GM12878 (cell line): ENCODE measurements at regions of chr2 and their contacts with region 1.

Region 1: DNA sequence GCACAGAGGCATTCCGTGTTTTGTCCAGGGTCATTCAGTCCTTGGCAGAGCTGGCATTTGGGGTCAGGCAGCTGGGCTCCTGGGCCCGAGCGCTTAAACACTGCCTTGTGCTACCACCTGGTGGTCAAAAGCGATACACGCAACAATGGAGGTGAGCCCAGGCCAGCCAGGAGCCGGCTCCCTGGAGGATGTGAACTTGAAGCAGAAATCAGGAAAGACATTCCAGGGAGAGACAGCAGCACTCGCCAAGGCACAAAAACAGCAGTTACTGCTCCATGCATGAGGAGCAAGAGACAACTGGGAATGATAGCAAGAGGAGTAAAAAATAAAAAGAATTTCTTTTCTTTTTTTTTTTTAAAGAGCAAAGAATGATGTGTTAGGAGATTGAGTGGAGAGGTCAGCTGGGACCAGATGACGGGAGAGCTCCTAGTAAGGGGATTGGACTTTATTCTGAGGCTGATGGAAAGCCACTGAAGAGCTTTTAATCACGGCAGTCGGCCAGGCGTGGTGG is 20.7 kb downstream of the SCYGR8 start:
- DNase-seq: no peak
- ATAC-seq: peak; percentile 100
- H3K4me3 ChIP-seq: no peak overlapping the region
- H3K27ac ChIP-seq: no peak overlapping the region
- H3K4me1 ChIP-seq: no peaks in the 10 kb centered on the region
- H3K27me3 ChIP-seq: no peaks in the 10 kb centered on the region
- CTCF ChIP-seq: peak; percentile 84 to 91 (median 84)
- EP300 ChIP-seq: no peak
- POLR2A ChIP-seq: no peak
- RAD21 ChIP-seq: peak; percentile 93

Region 2: DNA sequence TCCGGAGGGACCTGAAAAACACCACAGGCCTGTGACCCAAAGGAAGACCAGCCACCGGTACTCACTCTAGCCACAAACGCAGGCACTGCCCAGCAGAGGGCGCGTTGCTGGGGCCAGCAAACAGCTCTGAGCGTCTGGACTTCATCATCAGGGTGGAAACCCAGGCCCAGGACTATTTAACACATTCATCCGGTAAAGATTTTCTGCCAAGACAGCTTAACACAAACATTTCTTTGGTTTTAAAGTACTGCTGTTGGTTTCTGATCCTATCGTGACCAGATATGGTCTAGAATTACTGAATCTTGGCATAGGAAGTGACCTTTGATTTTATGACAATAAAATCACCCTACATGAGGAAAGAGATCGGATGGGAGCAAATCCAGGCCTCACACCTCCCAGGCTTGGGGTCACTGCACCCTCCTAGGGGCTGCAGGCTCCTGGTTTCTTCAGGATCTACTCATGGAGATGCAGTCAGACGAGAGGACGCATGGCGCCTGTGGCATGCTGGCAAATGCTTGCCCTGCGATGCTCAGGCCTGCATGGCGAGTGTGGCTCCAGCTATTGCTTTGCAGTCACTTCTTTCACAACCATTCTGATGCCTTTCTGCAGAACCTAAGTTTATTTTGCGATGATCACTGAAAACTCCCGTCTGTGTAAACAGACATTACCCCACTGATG is 732.8 kb before region 1 on chr2:
- CTCF ChIA-PET with region 1: interaction called, 10 read pairs
- POLR2A ChIA-PET with region 1: no interaction called
- RAD21 ChIA-PET with region 1: no interaction called
- SMC1A ChIA-PET with region 1: no interaction called
- in situ Hi-C with region 1: no loop called
- intact Hi-C with region 1: no loop called
- DNase-seq: no peak
- ATAC-seq: peak; percentile 92
- H3K4me3 ChIP-seq: no peak overlapping the region
- H3K27ac ChIP-seq: no peak overlapping the region
- H3K4me1 ChIP-seq: no peaks in the 10 kb centered on the region
- H3K27me3 ChIP-seq: no peaks in the 10 kb centered on the region
- CTCF ChIP-seq: peak; percentile 53 to 82 (median 74)
- EP300 ChIP-seq: no peak
- POLR2A ChIP-seq: no peak
- RAD21 ChIP-seq: peak; percentile 52

Region 3: DNA sequence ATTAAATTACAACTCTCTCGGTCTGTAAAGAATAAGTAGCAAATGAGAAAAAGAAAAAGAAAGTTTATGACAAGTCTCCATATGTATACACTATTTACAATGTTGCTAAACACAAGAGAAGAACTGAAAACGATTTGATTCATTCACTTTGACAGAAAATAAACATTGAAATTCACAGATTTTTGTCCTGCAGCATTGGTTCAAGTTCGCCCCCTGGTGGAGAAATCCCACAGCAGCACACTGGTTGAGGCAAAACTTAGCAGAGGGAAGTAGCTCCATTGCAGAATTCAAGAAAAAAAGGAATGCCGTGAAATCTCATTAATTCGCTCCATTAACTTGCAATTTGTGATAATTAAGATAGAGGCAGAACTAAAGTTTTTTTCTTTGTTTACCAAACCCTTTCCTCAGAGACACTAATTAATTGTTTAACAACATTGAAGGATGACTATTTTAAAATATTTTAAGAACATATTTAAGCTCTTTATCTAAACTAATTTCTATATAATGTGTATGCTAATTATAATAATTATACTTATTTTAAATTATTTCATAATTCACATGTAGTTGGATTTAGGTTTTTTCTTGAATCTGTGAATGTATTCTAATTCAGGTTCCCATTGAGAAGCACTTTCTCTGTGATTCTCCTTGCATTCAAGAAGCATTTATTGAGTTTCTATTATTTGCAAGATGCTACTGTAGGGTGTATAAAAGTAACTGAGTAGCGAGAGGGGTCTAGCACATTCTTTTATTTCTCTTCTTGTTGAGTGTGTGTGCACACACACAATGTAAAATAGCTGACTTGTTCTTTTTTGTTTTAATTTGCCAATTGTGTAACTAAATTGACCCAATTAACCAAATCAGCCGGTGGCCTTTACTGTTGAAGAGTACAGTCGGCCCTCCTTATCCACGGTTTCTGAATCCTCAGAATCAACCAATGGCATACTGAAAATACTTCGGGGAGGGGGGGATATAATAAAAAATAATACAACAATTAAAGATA is 527.9 kb before region 1 on chr2:
- CTCF ChIA-PET with region 1: interaction called, 24 read pairs
- POLR2A ChIA-PET with region 1: no interaction called
- RAD21 ChIA-PET with region 1: interaction called, 21 read pairs
- SMC1A ChIA-PET with region 1: interaction called, 18 read pairs
- in situ Hi-C with region 1: no loop called
- intact Hi-C with region 1: loop called (anchors 5 kb)
- DNase-seq: peak; percentile 21
- ATAC-seq: peak; percentile 80
- H3K4me3 ChIP-seq: no peak overlapping the region
- H3K27ac ChIP-seq: no peak overlapping the region
- H3K4me1 ChIP-seq: no peaks in the 10 kb centered on the region
- H3K27me3 ChIP-seq: no peaks in the 10 kb centered on the region
- CTCF ChIP-seq: peak; percentile 89 to 95 (median 91); a peak in 5 of 6 replicates
- EP300 ChIP-seq: no peak
- POLR2A ChIP-seq: no peak
- RAD21 ChIP-seq: peak; percentile 97

Region 4: GRCh38 chr2:227479865-227480475 is 286.5 kb before region 1 on chr2:
- CTCF ChIA-PET with region 1: interaction called, 54 read pairs
- POLR2A ChIA-PET with region 1: no interaction called
- RAD21 ChIA-PET with region 1: interaction called, 28 read pairs
- SMC1A ChIA-PET with region 1: interaction called, 28 read pairs
- in situ Hi-C with region 1: loop called (anchors 5 kb)
- intact Hi-C with region 1: no loop called
- DNase-seq: no peak
- ATAC-seq: peak; percentile 64
- H3K4me3 ChIP-seq: peak overlapping the region; percentile 12; the same call in 1 of the 2 replicates
- H3K27ac ChIP-seq: peak overlapping the region; percentile 68
- H3K4me1 ChIP-seq: peaks cover 32% of the 10 kb centered on the region
- H3K27me3 ChIP-seq: no peaks in the 10 kb centered on the region
- CTCF ChIP-seq: peak; percentile 28 to 65 (median 56); a peak in 5 of 6 replicates
- EP300 ChIP-seq: no peak
- POLR2A ChIP-seq: no peak
- RAD21 ChIP-seq: peak; percentile 65

Region 5: GRCh38 chr2:227739351-227739750 is 27.1 kb before region 1 on chr2:
- CTCF ChIA-PET with region 1: interaction called, 24 read pairs
- POLR2A ChIA-PET with region 1: no interaction called
- RAD21 ChIA-PET with region 1: interaction called, 6 read pairs
- SMC1A ChIA-PET with region 1: interaction called, 14 read pairs
- in situ Hi-C with region 1: no loop called
- intact Hi-C with region 1: no loop called
- DNase-seq: no peak
- ATAC-seq: no peak
- H3K4me3 ChIP-seq: no peak overlapping the region
- H3K27ac ChIP-seq: no peak overlapping the region
- H3K4me1 ChIP-seq: no peaks in the 10 kb centered on the region
- H3K27me3 ChIP-seq: no peaks in the 10 kb centered on the region
- CTCF ChIP-seq: no peak
- EP300 ChIP-seq: no peak
- POLR2A ChIP-seq: no peak
- RAD21 ChIP-seq: no peak

Region 6: DNA sequence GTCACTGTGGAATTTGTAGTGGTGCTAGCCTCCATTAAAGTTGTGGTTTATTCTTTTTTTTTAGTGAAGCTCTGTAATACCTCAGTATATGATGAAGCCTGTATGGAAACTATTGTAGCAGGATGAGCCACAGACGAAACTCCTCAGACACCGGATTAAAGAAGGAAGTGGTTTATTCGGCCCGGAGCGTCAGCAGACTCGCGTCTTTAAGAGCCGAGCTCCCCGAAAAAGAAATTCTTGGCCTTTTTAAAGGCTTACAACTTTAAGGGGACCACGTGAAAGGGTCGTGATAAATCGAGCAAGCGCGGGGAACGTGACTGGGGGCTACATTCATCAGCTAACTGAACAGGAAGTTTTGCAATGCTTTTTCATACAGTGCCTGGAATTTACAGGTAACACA is 39.1 kb after region 1 on chr2:
- CTCF ChIA-PET with region 1: no interaction called
- POLR2A ChIA-PET with region 1: interaction called, 3 read pairs
- RAD21 ChIA-PET with region 1: interaction called, 13 read pairs
- SMC1A ChIA-PET with region 1: interaction called, 8 read pairs
- in situ Hi-C with region 1: no loop called
- intact Hi-C with region 1: no loop called
- DNase-seq: peak; percentile 45
- ATAC-seq: peak; percentile 77
- H3K4me3 ChIP-seq: no peak overlapping the region
- H3K27ac ChIP-seq: peak overlapping the region; percentile 52
- H3K4me1 ChIP-seq: peaks cover 3% of the 10 kb centered on the region; the same call in 1 of the 2 replicates
- H3K27me3 ChIP-seq: no peaks in the 10 kb centered on the region
- CTCF ChIP-seq: no peak
- EP300 ChIP-seq: no peak
- POLR2A ChIP-seq: no peak
- RAD21 ChIP-seq: no peak

Region 7: GRCh38 chr2:227884511-227884947 is 118.1 kb after region 1 on chr2:
- CTCF ChIA-PET with region 1: interaction called, 14 read pairs
- POLR2A ChIA-PET with region 1: no interaction called
- RAD21 ChIA-PET with region 1: interaction called, 3 read pairs
- SMC1A ChIA-PET with region 1: interaction called, 9 read pairs
- in situ Hi-C with region 1: no loop called
- intact Hi-C with region 1: no loop called
- DNase-seq: no peak
- ATAC-seq: peak; percentile 99
- H3K4me3 ChIP-seq: no peak overlapping the region
- H3K27ac ChIP-seq: no peak overlapping the region
- H3K4me1 ChIP-seq: no peaks in the 10 kb centered on the region
- H3K27me3 ChIP-seq: 0 out of 4 replicates have a peak, but pooled peaks cover 0 to 2% of the 10 kb centered on the region in 2 experiments
- CTCF ChIP-seq: peak; percentile 85 to 96 (median 96)
- EP300 ChIP-seq: no peak
- POLR2A ChIP-seq: no peak
- RAD21 ChIP-seq: peak; percentile 67

Region 8: GRCh38 chr2:228056293-228057097 is 290.1 kb after region 1 on chr2:
- CTCF ChIA-PET with region 1: no interaction called
- POLR2A ChIA-PET with region 1: no interaction called
- RAD21 ChIA-PET with region 1: no interaction called
- SMC1A ChIA-PET with region 1: no interaction called
- in situ Hi-C with region 1: no loop called
- intact Hi-C with region 1: no loop called
- DNase-seq: no peak
- ATAC-seq: no peak
- H3K4me3 ChIP-seq: no peak overlapping the region
- H3K27ac ChIP-seq: no peak overlapping the region
- H3K4me1 ChIP-seq: no peaks in the 10 kb centered on the region
- H3K27me3 ChIP-seq: no peaks in the 10 kb centered on the region
- CTCF ChIP-seq: no peak
- EP300 ChIP-seq: no peak
- POLR2A ChIP-seq: no peak
- RAD21 ChIP-seq: no peak

Region 9: DNA sequence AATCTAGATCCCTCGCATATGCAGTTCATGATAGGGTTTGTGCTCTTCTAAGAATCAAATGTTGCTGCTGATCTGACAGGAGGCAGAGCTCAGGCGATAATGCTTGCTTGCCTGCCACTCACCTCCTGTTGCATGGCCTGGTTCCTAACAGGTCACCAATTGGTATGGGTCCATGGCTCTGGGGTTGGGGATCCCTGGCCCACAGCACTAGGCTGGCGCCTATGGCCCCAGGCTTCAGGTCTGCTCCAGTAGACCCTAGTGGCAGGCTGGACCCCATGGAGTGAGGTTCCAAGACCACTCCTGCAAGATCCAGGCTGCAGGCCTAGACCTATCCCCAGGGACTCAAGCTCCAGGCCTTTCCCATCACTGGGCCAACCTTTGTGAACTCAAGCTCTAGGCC is 312.8 kb after region 1 on chr2:
- CTCF ChIA-PET with region 1: no interaction called
- POLR2A ChIA-PET with region 1: no interaction called
- RAD21 ChIA-PET with region 1: no interaction called
- SMC1A ChIA-PET with region 1: no interaction called
- in situ Hi-C with region 1: no loop called
- intact Hi-C with region 1: no loop called
- DNase-seq: no peak
- ATAC-seq: no peak
- H3K4me3 ChIP-seq: no peak overlapping the region
- H3K27ac ChIP-seq: no peak overlapping the region
- H3K4me1 ChIP-seq: no peaks in the 10 kb centered on the region
- H3K27me3 ChIP-seq: no peaks in the 10 kb centered on the region
- CTCF ChIP-seq: no peak
- EP300 ChIP-seq: no peak
- POLR2A ChIP-seq: no peak
- RAD21 ChIP-seq: no peak